Mammary epithelial cell (primary cell): ENCODE measurements at regions of chr15 and their contacts with region 1.

Region 1: GRCh38 chr15:74307827-74308644 is 59.4 kb downstream of the CYP11A1 start:
- DNase-seq: peak; percentile 58
- H3K4me3 ChIP-seq: no peak overlapping the region
- H3K27ac ChIP-seq: no peak overlapping the region
- H3K4me1 ChIP-seq: peaks cover 12% of the 10 kb centered on the region
- H3K27me3 ChIP-seq: no peaks in the 10 kb centered on the region
- CTCF ChIP-seq: peak; percentile 75 to 92

Region 2: DNA sequence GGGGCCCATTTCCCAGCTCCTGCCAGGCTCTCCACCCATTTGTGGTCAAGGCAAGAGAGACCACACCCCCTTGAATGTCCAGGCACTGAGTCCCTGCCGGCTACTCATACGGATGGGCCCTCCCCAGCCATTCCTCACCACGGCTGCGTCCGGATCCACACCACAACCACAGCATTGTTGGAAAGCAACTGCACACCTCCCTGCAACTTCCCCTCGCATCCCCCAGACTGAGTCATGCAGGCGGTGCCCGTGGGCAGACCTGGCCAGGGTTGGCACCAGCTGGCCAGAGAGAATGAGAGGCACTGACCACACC is 351.3 kb before region 1 on chr15:
- CTCF ChIA-PET with region 1: no interaction called
- dilution Hi-C with region 1: loop called (anchors 25 kb)
- in situ Hi-C with region 1: no loop called
- intact Hi-C with region 1: loop called (anchors 5 kb)
- DNase-seq: peak; percentile 97
- H3K4me3 ChIP-seq: no peak overlapping the region
- H3K27ac ChIP-seq: peak overlapping the region; percentile 80
- H3K4me1 ChIP-seq: peaks cover 41% of the 10 kb centered on the region
- H3K27me3 ChIP-seq: no peaks in the 10 kb centered on the region
- CTCF ChIP-seq: no peak

Region 3: GRCh38 chr15:74053941-74054529 is 254.0 kb before region 1 on chr15:
- CTCF ChIA-PET with region 1: interaction called, 13 read pairs
- dilution Hi-C with region 1: no loop called
- in situ Hi-C with region 1: no loop called
- intact Hi-C with region 1: loop called (anchors 1 kb)
- DNase-seq: peak; percentile 47
- H3K4me3 ChIP-seq: no peak overlapping the region
- H3K27ac ChIP-seq: no peak overlapping the region
- H3K4me1 ChIP-seq: peaks cover 24% of the 10 kb centered on the region
- H3K27me3 ChIP-seq: no peaks in the 10 kb centered on the region
- CTCF ChIP-seq: peak; percentile 36 to 77

Region 4: GRCh38 chr15:74062671-74063070 is 245.4 kb before region 1 on chr15:
- CTCF ChIA-PET with region 1: interaction called, 3 read pairs
- dilution Hi-C with region 1: no loop called
- in situ Hi-C with region 1: loop called in 1 of 2 experiments (anchors 10 kb)
- intact Hi-C with region 1: no loop called
- DNase-seq: no peak
- H3K4me3 ChIP-seq: no peak overlapping the region
- H3K27ac ChIP-seq: no peak overlapping the region
- H3K4me1 ChIP-seq: no peaks in the 10 kb centered on the region
- H3K27me3 ChIP-seq: no peaks in the 10 kb centered on the region
- CTCF ChIP-seq: no peak

Region 5: DNA sequence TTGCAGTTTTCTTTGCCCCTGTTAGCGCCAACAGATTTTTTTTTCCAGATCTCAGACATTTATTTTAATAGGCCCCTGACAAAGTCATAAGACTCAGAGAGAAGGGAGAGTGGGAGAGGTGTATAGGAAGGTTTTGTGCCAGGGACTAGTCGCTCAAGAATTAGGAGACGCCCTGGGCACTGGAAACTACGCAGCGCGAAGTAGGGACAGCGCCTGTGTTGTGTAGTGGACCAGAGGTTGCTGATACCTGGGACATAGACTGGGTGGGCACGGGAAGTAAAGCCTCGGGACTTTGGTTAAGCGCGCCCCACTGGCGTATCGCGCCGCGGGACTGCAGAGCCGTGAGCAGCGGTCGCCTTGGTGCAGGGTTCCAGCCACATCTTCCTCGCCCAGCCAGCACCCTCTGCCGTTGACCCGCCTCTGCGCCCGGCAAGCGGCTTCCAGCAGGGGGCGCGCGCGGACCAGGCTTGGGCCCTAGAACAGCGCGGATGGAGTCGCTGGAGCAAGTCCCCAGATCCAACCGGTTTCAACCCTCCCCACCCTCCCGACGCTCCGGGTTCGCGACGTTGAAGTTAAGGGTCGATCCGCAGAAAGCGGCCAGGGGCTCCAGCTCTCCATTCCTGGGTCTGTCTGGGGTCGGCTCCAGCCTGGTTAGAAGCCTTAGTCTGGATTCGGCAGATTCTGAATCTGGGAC is 180.6 kb before region 1 on chr15:
- CTCF ChIA-PET with region 1: interaction called, 23 read pairs
- dilution Hi-C with region 1: no loop called
- in situ Hi-C with region 1: loop called (anchors 5 kb)
- intact Hi-C with region 1: loop called (anchors 1 kb)
- DNase-seq: peak; percentile 76
- H3K4me3 ChIP-seq: peak overlapping the region in 1 of 3 experiments; percentile 41
- H3K27ac ChIP-seq: no peak overlapping the region
- H3K4me1 ChIP-seq: peaks cover 13% of the 10 kb centered on the region
- H3K27me3 ChIP-seq: peaks cover 41% of the 10 kb centered on the region
- CTCF ChIP-seq: peak; percentile 80 to 99

Region 6: DNA sequence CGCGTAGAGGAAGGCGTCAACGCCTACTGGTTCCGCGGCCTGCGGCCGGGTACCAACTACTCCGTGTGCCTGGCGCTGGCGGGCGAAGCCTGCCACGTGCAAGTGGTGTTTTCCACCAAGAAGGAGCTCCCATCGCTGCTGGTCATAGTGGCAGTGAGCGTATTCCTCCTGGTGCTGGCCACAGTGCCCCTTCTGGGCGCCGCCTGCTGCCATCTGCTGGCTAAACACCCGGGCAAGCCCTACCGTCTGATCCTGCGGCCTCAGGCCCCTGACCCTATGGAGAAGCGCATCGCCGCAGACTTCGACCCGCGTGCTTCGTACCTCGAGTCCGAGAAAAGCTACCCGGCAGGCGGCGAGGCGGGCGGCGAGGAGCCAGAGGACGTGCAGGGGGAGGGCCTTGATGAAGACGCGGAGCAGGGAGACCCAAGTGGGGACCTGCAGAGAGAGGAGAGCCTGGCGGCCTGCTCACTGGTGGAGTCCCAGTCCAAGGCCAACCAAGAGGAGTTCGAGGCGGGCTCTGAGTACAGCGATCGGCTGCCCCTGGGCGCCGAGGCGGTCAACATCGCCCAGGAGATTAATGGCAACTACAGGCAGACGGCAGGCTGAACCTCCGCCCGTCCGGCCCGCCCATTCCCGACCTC is 173.5 kb before region 1 on chr15:
- CTCF ChIA-PET with region 1: interaction called, 23 read pairs
- dilution Hi-C with region 1: no loop called
- in situ Hi-C with region 1: loop called (anchors 5 kb)
- intact Hi-C with region 1: no loop called
- DNase-seq: no peak
- H3K4me3 ChIP-seq: no peak overlapping the region
- H3K27ac ChIP-seq: no peak overlapping the region
- H3K4me1 ChIP-seq: peaks cover 8% of the 10 kb centered on the region
- H3K27me3 ChIP-seq: peaks cover 65% of the 10 kb centered on the region
- CTCF ChIP-seq: peak; percentile 14 to 37

Region 7: DNA sequence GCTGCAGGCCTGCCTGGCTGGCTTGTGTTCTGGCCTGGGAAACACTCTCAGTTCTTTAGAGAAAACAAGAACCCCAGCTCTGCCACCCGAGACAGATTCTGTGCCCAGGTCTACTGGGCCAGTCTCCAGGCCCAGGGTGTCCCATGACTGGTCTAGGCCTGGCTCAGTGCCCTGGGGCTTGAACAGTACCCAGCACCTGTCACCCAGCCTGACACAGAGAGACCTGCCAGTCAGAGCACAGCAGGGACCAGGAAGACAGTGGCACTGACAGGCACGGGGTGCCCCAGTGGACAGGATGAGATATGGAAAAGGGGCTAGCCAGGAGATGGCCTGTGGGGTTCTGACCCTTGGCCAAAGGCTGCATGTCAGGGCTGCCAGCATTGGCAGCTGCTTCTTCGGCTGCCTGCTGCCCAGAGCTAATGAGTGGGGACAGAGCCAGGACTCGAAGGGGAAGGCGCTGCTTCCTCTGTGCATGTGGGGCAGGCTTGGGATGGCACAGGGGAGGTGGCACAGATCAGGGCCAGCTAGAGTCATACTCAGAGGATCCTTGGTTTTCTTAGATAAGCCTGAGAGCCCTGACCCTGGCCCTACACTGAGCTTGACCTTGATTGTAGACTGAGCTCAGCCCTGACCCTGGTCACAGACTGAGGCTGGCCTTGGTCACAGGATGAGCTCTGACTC is 56.8 kb before region 1 on chr15:
- CTCF ChIA-PET with region 1: no interaction called
- dilution Hi-C with region 1: no loop called
- in situ Hi-C with region 1: no loop called
- intact Hi-C with region 1: no loop called
- DNase-seq: no peak
- H3K4me3 ChIP-seq: no peak overlapping the region
- H3K27ac ChIP-seq: no peak overlapping the region
- H3K4me1 ChIP-seq: peaks cover 6% of the 10 kb centered on the region
- H3K27me3 ChIP-seq: no peaks in the 10 kb centered on the region
- CTCF ChIP-seq: no peak